ENCODE measurements at regions of chr17 and their contacts with region 1.

Region 1: GRCh38 chr17:8222630-8223356 is 12.4 kb upstream of the AURKB start:
- DNase-seq: peak; percentile 76
- H3K4me3 ChIP-seq: peak overlapping the region; percentile 83 to 86
- H3K27ac ChIP-seq: peak overlapping the region; percentile 92 to 95
- H3K4me1 ChIP-seq: peaks cover 8 to 22% of the 10 kb centered on the region in 2 experiments; a peak in 3 of 4 replicates
- H3K27me3 ChIP-seq: no peaks in the 10 kb centered on the region
- CTCF ChIP-seq: no peak
- EP300 ChIP-seq: no peak
- RAD21 ChIP-seq: no peak

Region 2: GRCh38 chr17:7972131-7972785 is 250.5 kb before region 1 on chr17:
- CTCF ChIA-PET with region 1: no interaction called
- POLR2A ChIA-PET with region 1: no interaction called
- DNase-seq: no peak
- H3K4me3 ChIP-seq: no peak overlapping the region
- H3K27ac ChIP-seq: no peak overlapping the region
- H3K4me1 ChIP-seq: no peaks in the 10 kb centered on the region
- H3K27me3 ChIP-seq: no peaks in the 10 kb centered on the region
- CTCF ChIP-seq: peak; percentile 56
- EP300 ChIP-seq: no peak
- RAD21 ChIP-seq: no peak

Region 3: GRCh38 chr17:8173056-8173870 is 49.5 kb before region 1 on chr17:
- CTCF ChIA-PET with region 1: no interaction called
- POLR2A ChIA-PET with region 1: interaction called, 10 read pairs
- DNase-seq: peak; percentile 77
- H3K4me3 ChIP-seq: peak overlapping the region; percentile 38 to 54
- H3K27ac ChIP-seq: peak overlapping the region; percentile 97 to 98
- H3K4me1 ChIP-seq: peaks cover 6 to 28% of the 10 kb centered on the region in 2 experiments; a peak in 2 of 4 replicates
- H3K27me3 ChIP-seq: no peaks in the 10 kb centered on the region
- CTCF ChIP-seq: no peak
- EP300 ChIP-seq: peak; percentile 57 to 58
- RAD21 ChIP-seq: no peak

Region 4: GRCh38 chr17:8266648-8267479 is 44.1 kb after region 1 on chr17:
- CTCF ChIA-PET with region 1: no interaction called
- POLR2A ChIA-PET with region 1: no interaction called
- DNase-seq: no peak
- H3K4me3 ChIP-seq: no peak overlapping the region
- H3K27ac ChIP-seq: no peak overlapping the region
- H3K4me1 ChIP-seq: no peaks in the 10 kb centered on the region
- H3K27me3 ChIP-seq: no peaks in the 10 kb centered on the region
- CTCF ChIP-seq: no peak
- EP300 ChIP-seq: no peak
- RAD21 ChIP-seq: no peak

Measured in SK-N-SH (cell line).